CD14-positive monocyte (primary cell): ENCODE measurements at regions of chr12 and their contacts with region 1.

Region 1: DNA sequence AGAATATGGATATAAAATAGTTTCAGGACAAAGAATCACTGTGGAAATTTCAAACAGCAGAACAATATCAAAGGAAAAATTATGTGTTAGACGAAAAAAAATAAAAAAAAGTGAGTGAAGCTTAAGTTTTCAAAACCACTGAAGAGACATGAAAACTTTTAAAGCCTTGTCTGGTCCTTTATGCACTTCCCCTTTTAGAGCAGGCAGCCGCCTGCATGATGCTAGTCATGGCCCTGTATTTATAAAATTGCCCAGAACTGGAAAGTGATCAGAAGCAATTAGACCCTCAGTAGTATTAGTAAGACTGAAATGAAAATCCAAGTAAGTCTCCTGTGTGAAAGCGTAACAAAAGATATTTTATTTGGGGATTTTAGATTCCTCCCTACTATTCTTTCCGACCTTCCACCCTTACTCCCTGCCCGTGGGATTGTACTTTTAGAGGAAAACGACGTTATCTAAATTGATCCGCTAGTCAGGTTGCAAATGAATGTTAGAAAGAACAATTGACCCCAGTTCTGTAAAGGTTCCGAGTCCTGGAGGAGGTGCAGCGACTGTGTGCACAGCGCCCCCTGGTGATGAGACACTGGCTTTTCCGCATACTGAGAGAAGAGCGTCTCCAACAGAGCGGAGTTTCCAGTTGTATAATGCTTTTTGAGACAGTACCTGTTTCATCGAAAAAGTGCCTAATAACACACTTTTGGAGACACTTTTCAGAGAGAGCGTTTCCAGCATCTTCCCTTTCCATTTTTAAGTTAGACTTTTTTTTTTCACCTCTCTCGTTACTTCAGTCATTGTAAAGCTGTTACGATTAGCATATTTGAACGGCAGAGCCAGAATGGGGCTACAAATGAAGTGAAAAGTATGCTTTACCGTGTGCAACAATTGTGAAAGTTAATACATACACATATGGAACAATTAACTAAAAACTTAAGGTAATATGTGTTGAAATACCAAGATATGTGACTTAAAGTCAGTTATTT is 12.4 kb downstream of the MGST1 start:
- DNase-seq: peak; percentile 46 to 66 (median 66)
- H3K4me3 ChIP-seq: no peak overlapping the region
- H3K4me3 Mint-ChIP-seq: no peak overlapping the region
- H3K27ac ChIP-seq: peak overlapping the region in 1 of 2 donors; percentile 46
- H3K27ac Mint-ChIP-seq: peak overlapping the region; percentile 51 to 87 (median 74)
- H3K4me1 ChIP-seq: peaks cover 17% of the 10 kb centered on the region in 2 donors
- H3K4me1 Mint-ChIP-seq: peaks cover 20% of the 10 kb centered on the region
- H3K27me3 ChIP-seq: no peaks in the 10 kb centered on the region
- H3K27me3 Mint-ChIP-seq: no peaks in the 10 kb centered on the region
- CTCF ChIP-seq: peak; percentile 99

Region 2: GRCh38 chr12:15220994-15221885 is 1138.6 kb before region 1 on chr12 and contains the start of gene RERG:
- intact Hi-C with region 1: no loop called
- DNase-seq: peak; percentile 48 to 61 (median 51)
- H3K4me3 ChIP-seq: peak within 1 kb of the TSS in 2 of 3 experiments; percentile 5 to 51
- H3K4me3 Mint-ChIP-seq: peak within 1 kb of the TSS; percentile 49 to 86
- H3K27ac ChIP-seq: no peak within 1 kb of the TSS
- H3K27ac Mint-ChIP-seq: no peak within 1 kb of the TSS
- H3K4me1 ChIP-seq: peaks cover 6 to 7% of the 10 kb centered on the region in 2 donors
- H3K4me1 Mint-ChIP-seq: peaks cover 7% of the 10 kb centered on the region
- H3K27me3 ChIP-seq: peaks cover 20 to 36% of the 10 kb centered on the region in 2 donors
- H3K27me3 Mint-ChIP-seq: peaks cover 21 to 33% (median 31%) of the 10 kb centered on the region in 3 donors
- CTCF ChIP-seq: peak; percentile 91
- polyA plus RNA-seq, gene RERG: not detected

Region 3: DNA sequence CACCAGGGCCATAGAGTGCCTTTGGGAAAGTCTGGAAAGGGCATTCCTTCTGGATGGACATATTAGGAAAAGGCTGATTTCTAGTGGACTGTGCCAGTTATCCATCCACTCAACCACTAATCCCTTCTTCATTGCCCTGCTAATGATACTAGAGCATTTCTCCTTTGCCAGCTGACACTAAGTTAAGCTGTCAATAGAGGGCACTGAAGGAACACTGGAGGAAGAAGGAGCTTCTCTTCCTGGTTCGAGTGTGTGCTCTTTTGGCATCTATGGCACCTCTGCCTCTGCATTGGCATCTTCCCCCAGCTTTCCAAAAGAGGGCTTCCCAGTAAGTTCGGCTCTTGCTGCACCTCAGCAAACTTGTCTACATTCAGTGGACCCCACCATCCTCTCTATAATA is 283.2 kb before region 1 on chr12:
- intact Hi-C with region 1: loop called in 1 of 2 experiments (anchors 10 kb)
- DNase-seq: peak; percentile 6 to 30 (median 20)
- H3K4me3 ChIP-seq: no peak overlapping the region
- H3K4me3 Mint-ChIP-seq: no peak overlapping the region
- H3K27ac ChIP-seq: no peak overlapping the region
- H3K27ac Mint-ChIP-seq: peak overlapping the region in 1 of 7 donors; percentile 61
- H3K4me1 ChIP-seq: no peaks in the 10 kb centered on the region
- H3K4me1 Mint-ChIP-seq: peaks cover 1% of the 10 kb centered on the region
- H3K27me3 ChIP-seq: peaks cover 0 to 3% of the 10 kb centered on the region in 2 donors
- H3K27me3 Mint-ChIP-seq: peaks cover 0 to 1% (median 0%) of the 10 kb centered on the region in 3 donors
- CTCF ChIP-seq: peak; percentile 45

Region 4: DNA sequence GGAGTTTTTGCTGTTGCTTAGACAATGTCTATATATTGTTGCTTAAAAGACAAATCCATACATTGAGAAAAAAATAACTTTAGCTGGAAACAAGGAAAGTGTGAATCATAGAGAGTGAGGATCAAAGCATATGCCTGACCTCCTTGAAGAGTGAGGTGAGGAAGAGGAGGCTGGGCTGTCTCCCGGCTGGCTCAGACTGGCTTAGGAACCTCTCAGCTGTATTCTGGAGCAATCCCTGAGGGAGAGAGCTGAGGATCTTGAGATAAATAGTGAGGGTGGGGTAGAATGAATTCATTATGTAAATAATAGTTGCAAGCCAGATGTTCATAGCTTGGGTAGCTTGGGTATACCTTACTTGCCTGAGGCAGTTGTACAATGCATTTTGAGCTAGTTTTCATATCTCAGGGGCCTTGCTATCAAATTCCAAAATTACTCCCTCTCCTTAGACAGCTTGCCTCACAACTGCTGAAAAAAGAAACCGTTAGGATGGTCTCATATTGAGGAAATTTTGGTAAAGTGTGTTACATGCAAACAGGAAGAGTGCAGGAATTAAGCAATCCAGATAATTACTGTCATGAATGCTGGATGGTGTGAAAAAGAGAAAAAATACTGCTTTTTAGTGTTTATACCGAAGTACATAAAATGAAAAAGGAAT is 51.9 kb before region 1 on chr12:
- intact Hi-C with region 1: no loop called
- DNase-seq: no peak
- H3K4me3 ChIP-seq: peak overlapping the region in 1 of 3 experiments; percentile 16
- H3K4me3 Mint-ChIP-seq: no peak overlapping the region
- H3K27ac ChIP-seq: peak overlapping the region in 1 of 2 donors; percentile 54
- H3K27ac Mint-ChIP-seq: peak overlapping the region in 3 of 7 donors; percentile 34 to 56 (median 43)
- H3K4me1 ChIP-seq: peaks cover 8 to 10% of the 10 kb centered on the region in 2 donors
- H3K4me1 Mint-ChIP-seq: peaks cover 13% of the 10 kb centered on the region
- H3K27me3 ChIP-seq: no peaks in the 10 kb centered on the region
- H3K27me3 Mint-ChIP-seq: no peaks in the 10 kb centered on the region
- CTCF ChIP-seq: no peak